Caco-2 (cell line): ENCODE measurements at regions of chr7 and their contacts with region 1.

Region 1: DNA sequence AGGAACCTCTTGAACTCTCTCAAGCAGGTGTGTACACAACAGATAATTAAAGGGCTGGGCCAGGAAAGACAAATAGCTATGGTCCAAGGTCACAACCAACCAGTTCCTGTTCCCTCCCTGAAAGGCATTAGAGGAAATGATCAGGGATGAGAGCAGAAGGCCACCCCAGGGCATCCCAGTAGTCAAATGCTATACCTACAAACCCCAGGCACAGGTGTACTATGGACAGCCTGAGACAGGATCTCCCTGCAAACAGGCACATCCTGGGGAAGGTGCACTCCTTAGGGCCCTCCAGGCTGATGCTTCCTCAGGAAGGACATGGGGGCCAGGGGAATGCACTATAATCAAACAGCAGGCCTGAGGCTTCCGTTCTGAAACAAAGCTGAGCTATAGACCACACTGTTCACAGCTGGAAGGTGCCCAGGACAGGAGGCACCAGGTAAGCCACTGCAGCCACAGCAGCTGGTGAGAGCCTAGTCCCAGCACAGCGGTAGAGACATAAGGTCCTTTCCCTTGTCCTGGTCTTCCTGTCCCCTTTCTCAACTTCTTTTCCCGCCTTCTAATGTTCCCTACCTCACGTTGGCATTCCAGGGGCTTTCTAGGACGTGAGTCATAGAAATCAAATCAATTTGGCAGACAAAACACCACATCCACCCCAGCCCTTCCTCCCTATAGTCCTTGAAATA is 13.3 kb downstream of the PARP12 start:
- DNase-seq: peak; percentile 68 to 70
- H3K4me3 ChIP-seq: no peak overlapping the region
- H3K4me3 Mint-ChIP-seq: no peak overlapping the region
- H3K27ac Mint-ChIP-seq: no peak overlapping the region
- H3K4me1 ChIP-seq: peaks cover 24% of the 10 kb centered on the region
- H3K4me1 Mint-ChIP-seq: peaks cover 21% of the 10 kb centered on the region
- H3K27me3 ChIP-seq: no peaks in the 10 kb centered on the region
- H3K27me3 Mint-ChIP-seq: no peaks in the 10 kb centered on the region
- CTCF ChIP-seq: no peak

Region 2: GRCh38 chr7:140025814-140026433 is 23.6 kb before region 1 on chr7:
- CTCF ChIA-PET with region 1: no interaction called
- POLR2A ChIA-PET with region 1: no interaction called
- intact Hi-C with region 1: no loop called
- DNase-seq: no peak
- H3K4me3 ChIP-seq: no peak overlapping the region
- H3K4me3 Mint-ChIP-seq: no peak overlapping the region
- H3K27ac Mint-ChIP-seq: no peak overlapping the region
- H3K4me1 ChIP-seq: no peaks in the 10 kb centered on the region
- H3K4me1 Mint-ChIP-seq: no peaks in the 10 kb centered on the region
- H3K27me3 ChIP-seq: no peaks in the 10 kb centered on the region
- H3K27me3 Mint-ChIP-seq: no peaks in the 10 kb centered on the region
- CTCF ChIP-seq: no peak

Region 3: DNA sequence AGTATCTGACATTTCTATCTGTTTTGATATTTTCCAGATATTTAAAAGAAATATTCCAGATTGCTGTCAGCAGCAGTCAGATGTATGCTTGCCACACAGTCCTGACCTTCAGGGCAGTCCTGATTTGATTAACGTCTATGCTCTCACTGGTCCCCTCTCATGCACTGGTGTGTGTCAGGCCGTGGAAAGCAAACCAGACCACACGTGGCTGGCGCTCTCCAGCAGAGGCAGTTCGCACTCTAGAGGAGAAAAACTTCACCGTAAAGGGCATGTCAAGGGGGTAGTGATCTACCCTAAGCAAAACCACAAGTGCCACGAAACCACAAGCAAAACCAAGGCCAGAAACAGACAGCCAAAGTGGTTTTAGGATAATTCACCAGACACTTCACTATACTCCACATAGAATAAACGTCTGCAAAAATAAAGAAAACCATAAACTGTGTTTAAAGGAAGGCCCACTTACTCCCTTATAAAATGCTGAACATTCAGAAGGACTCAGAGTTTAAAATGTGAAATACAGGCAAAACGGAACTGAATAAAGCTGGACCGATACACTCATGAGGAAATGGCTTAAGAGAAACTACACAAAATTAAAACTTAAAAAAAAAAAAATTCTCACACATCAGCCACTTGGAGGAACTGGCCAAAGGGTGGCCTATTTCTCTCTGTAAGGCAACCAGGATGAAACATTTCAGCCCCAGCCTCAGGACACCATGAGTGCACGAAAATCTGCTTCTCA is 13.1 kb before region 1 on chr7:
- CTCF ChIA-PET with region 1: no interaction called
- POLR2A ChIA-PET with region 1: no interaction called
- intact Hi-C with region 1: no loop called
- DNase-seq: no peak
- H3K4me3 ChIP-seq: no peak overlapping the region
- H3K4me3 Mint-ChIP-seq: no peak overlapping the region
- H3K27ac Mint-ChIP-seq: no peak overlapping the region
- H3K4me1 ChIP-seq: no peaks in the 10 kb centered on the region
- H3K4me1 Mint-ChIP-seq: no peaks in the 10 kb centered on the region
- H3K27me3 ChIP-seq: no peaks in the 10 kb centered on the region
- H3K27me3 Mint-ChIP-seq: no peaks in the 10 kb centered on the region
- CTCF ChIP-seq: no peak

Region 4: DNA sequence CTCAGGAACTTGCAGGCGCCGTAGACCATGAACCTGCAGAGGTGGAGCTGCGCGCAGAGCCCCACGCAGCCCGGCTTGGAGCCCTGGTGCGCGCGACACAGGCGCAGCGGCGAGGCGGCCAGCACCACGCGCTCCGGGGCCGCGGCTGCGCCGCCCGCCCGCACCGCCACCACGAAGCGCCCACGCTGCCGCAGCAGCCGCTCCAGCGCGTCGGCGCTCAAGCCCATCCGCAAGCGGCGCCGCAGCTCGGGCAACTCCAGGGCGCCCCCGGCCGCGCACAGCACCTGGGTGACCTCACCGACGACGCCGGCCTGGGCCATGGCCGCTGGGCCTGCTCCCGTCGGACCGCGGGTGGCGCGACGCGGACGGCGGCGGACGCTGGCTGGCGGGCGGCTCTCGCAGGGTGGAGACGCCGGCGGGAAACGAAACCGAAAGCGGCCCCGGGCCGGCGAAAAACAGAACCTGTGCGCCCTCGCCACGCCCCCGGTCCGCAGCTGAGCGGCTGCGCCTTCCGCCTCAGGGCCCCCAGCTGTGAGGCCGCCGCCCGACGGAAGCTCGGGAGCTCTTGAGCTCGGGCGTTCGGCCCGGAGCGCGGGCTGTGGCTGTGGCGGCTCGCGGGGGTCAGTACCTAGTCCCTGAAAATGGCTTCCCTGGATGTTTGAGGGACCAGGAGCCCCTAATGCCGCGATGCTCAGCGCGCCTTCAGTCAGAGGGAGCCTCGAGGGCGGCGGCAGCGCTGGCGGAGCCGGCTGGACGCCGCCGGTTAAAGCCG is 13.2 kb after region 1 on chr7 and contains the start of gene PARP12:
- CTCF ChIA-PET with region 1: no interaction called
- POLR2A ChIA-PET with region 1: no interaction called
- intact Hi-C with region 1: loop called (anchors 1 kb)
- DNase-seq: peak; percentile 86 to 90
- H3K4me3 ChIP-seq: peak within 1 kb of the TSS; percentile 69
- H3K4me3 Mint-ChIP-seq: peak within 1 kb of the TSS; percentile 70
- H3K27ac Mint-ChIP-seq: no peak within 1 kb of the TSS
- H3K4me1 ChIP-seq: no peaks in the 10 kb centered on the region
- H3K4me1 Mint-ChIP-seq: peaks cover 15% of the 10 kb centered on the region
- H3K27me3 ChIP-seq: no peaks in the 10 kb centered on the region
- H3K27me3 Mint-ChIP-seq: no peaks in the 10 kb centered on the region
- CTCF ChIP-seq: no peak
- total RNA-seq, gene PARP12: 20.2 and 23.7 TPM in 2 replicates